Panc1 (cell line): ENCODE measurements at regions of chr1 and their contacts with region 1.

Region 1: GRCh38 chr1:202462342-202463076 is 114.0 kb downstream of the PPP1R12B start:
- DNase-seq: no peak
- ATAC-seq: no peak
- H3K4me3 ChIP-seq: no peak overlapping the region
- H3K27ac ChIP-seq: no peak overlapping the region
- H3K4me1 ChIP-seq: no peaks in the 10 kb centered on the region
- H3K27me3 ChIP-seq: no peaks in the 10 kb centered on the region
- CTCF ChIP-seq: no peak

Region 2: GRCh38 chr1:202063100-202063499 is 399.4 kb before region 1 on chr1:
- CTCF ChIA-PET with region 1: no interaction called
- POLR2A ChIA-PET with region 1: interaction called, 14 read pairs
- in situ Hi-C with region 1: no loop called
- intact Hi-C with region 1: no loop called
- DNase-seq: peak; percentile 50
- ATAC-seq: no peak
- H3K4me3 ChIP-seq: no peak overlapping the region
- H3K27ac ChIP-seq: peak overlapping the region; percentile 48; the same call in 1 of the 2 replicates
- H3K4me1 ChIP-seq: peaks cover 13% of the 10 kb centered on the region; the same call in 1 of the 2 replicates
- H3K27me3 ChIP-seq: no peaks in the 10 kb centered on the region
- CTCF ChIP-seq: no peak

Region 3: GRCh38 chr1:202599677-202600431 is 137.3 kb after region 1 on chr1:
- CTCF ChIA-PET with region 1: interaction called, 10 read pairs
- POLR2A ChIA-PET with region 1: no interaction called
- in situ Hi-C with region 1: no loop called
- intact Hi-C with region 1: loop called (anchors 10 kb)
- DNase-seq: no peak
- ATAC-seq: peak; percentile 95
- H3K4me3 ChIP-seq: no peak overlapping the region
- H3K27ac ChIP-seq: no peak overlapping the region
- H3K4me1 ChIP-seq: no peaks in the 10 kb centered on the region
- H3K27me3 ChIP-seq: no peaks in the 10 kb centered on the region
- CTCF ChIP-seq: peak; percentile 92

Region 4: GRCh38 chr1:202671122-202671797 is 208.8 kb after region 1 on chr1:
- CTCF ChIA-PET with region 1: no interaction called
- POLR2A ChIA-PET with region 1: no interaction called
- in situ Hi-C with region 1: no loop called
- intact Hi-C with region 1: no loop called
- DNase-seq: no peak
- ATAC-seq: no peak
- H3K4me3 ChIP-seq: no peak overlapping the region
- H3K27ac ChIP-seq: no peak overlapping the region
- H3K4me1 ChIP-seq: no peaks in the 10 kb centered on the region
- H3K27me3 ChIP-seq: no peaks in the 10 kb centered on the region
- CTCF ChIP-seq: no peak

Region 5: GRCh38 chr1:202710070-202711045 is 247.8 kb after region 1 on chr1 and contains the start of gene SYT2:
- CTCF ChIA-PET with region 1: no interaction called
- POLR2A ChIA-PET with region 1: no interaction called
- in situ Hi-C with region 1: no loop called
- intact Hi-C with region 1: loop called (anchors 10 kb)
- DNase-seq: no peak
- ATAC-seq: peak; percentile 70
- H3K4me3 ChIP-seq: peak within 1 kb of the TSS; percentile 26 to 43
- H3K27ac ChIP-seq: no peak within 1 kb of the TSS
- H3K4me1 ChIP-seq: no peaks in the 10 kb centered on the region
- H3K27me3 ChIP-seq: peaks cover 16% of the 10 kb centered on the region
- CTCF ChIP-seq: no peak
- total RNA-seq, gene SYT2: 0.03 TPM

Region 6: DNA sequence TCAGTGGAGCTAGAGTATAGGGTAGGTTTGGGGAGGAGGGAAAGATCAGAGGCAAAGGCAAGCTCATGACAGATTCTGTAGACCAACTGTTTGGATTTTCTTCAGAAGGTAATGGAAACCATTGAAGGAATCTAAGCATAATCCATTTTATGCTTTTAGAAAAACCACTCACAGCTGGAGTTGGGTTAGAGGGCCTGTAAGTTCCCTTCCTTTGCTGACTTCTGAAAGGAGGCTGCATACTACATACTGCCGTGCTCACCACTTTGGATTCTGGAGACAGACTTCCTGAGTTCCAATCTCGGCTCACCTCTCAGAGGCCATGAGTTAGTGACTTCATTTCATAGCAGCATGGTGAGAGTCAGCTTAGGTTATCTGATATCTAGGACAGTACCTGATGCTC is 254.1 kb after region 1 on chr1:
- CTCF ChIA-PET with region 1: interaction called, 16 read pairs
- POLR2A ChIA-PET with region 1: no interaction called
- in situ Hi-C with region 1: no loop called
- intact Hi-C with region 1: loop called (anchors 10 kb)
- DNase-seq: no peak
- ATAC-seq: no peak
- H3K4me3 ChIP-seq: no peak overlapping the region
- H3K27ac ChIP-seq: no peak overlapping the region
- H3K4me1 ChIP-seq: no peaks in the 10 kb centered on the region
- H3K27me3 ChIP-seq: no peaks in the 10 kb centered on the region; the same call in 1 of the 2 replicates
- CTCF ChIP-seq: no peak